A673 (cell line): ENCODE measurements at regions of chr7 and their contacts with region 1.

Region 1: GRCh38 chr7:99070361-99070760 is 73.5 kb downstream of the SMURF1 start:
- DNase-seq: no peak
- H3K4me3 ChIP-seq: no peak overlapping the region
- H3K27ac ChIP-seq: no peak overlapping the region
- H3K4me1 ChIP-seq: no peaks in the 10 kb centered on the region
- H3K27me3 ChIP-seq: no peaks in the 10 kb centered on the region
- CTCF ChIP-seq: no peak

Region 2: GRCh38 chr7:99184532-99185218 is 114.3 kb after region 1 on chr7:
- CTCF ChIA-PET with region 1: no interaction called
- POLR2A ChIA-PET with region 1: no interaction called
- intact Hi-C with region 1: no loop called
- DNase-seq: no peak
- H3K4me3 ChIP-seq: no peak overlapping the region
- H3K27ac ChIP-seq: no peak overlapping the region
- H3K4me1 ChIP-seq: no peaks in the 10 kb centered on the region
- H3K27me3 ChIP-seq: no peaks in the 10 kb centered on the region
- CTCF ChIP-seq: no peak

Region 3: GRCh38 chr7:99272476-99273045 is 202.2 kb after region 1 on chr7 and contains the start of gene MYH16:
- CTCF ChIA-PET with region 1: no interaction called
- POLR2A ChIA-PET with region 1: interaction called, 11 read pairs
- intact Hi-C with region 1: no loop called
- DNase-seq: no peak
- H3K4me3 ChIP-seq: no peak within 1 kb of the TSS
- H3K27ac ChIP-seq: no peak within 1 kb of the TSS
- H3K4me1 ChIP-seq: no peaks in the 10 kb centered on the region
- H3K27me3 ChIP-seq: no peaks in the 10 kb centered on the region
- CTCF ChIP-seq: no peak
- total RNA-seq, gene MYH16: not detected in 2 replicates

Region 4: GRCh38 chr7:100556541-100556940 is 1486.2 kb after region 1 on chr7:
- CTCF ChIA-PET with region 1: no interaction called
- POLR2A ChIA-PET with region 1: no interaction called
- intact Hi-C with region 1: no loop called
- DNase-seq: no peak
- H3K4me3 ChIP-seq: no peak overlapping the region
- H3K27ac ChIP-seq: no peak overlapping the region
- H3K4me1 ChIP-seq: no peaks in the 10 kb centered on the region
- H3K27me3 ChIP-seq: no peaks in the 10 kb centered on the region
- CTCF ChIP-seq: no peak